Left cardiac atrium (tissue), 4 donors: ENCODE measurements at regions of chr4 and their contacts with region 1.

Region 1: GRCh38 chr4:138870737-138871554 is 144.6 kb upstream of the NOCT start:
- DNase-seq: peak; percentile 26
- ATAC-seq: peak; percentile 66 to 73

Region 2: DNA sequence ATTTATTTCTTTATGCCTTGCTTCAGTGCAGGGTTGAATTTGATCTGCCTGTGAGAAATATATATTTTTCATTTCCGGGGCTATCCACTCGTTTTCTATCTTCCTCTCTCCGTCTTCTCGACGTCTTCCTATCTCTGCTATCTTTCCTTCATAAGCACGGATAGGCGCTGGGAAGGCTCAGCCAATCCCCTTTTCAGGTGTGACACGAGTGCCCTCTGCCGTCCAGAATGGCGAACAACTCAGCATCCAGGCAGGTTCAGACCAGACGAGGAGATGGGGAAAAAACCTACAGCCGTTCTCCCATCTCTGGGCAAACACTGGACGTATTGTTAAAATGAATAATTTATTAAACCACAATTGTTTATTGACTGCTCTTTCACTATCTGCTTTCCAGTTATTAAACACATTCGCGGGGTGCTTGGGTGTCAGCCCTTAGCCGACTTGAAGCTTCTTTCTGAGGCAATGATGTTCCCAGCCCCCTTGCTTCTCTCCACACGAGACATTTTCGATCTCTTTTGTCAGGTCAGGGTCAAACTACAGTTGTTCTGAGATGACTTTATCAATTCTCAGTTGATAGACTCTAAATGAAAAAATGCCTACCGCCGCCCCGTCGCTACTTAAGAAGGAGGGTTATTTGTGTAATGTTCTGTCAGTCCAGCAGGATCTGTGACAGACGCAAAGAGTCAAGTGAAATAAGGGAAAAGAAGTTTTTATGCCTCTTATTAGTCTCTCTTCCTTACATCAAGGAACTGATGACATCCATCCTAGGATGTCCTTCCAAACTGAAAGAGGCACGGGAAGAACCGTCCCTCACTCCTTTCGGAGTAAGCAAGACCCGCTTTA is 48.4 kb after region 1 on chr4:
- intact Hi-C with region 1: loop called in 1 of 2 experiments (anchors 5 kb)
- DNase-seq: peak; percentile 76
- ATAC-seq: peak; percentile 77 to 97